ENCODE measurements at regions of chr12 and their contacts with region 1.

Region 1: GRCh38 chr12:34022079-34022830 is at the start of gene ALG10:
- DNase-seq: peak; percentile 97
- H3K4me3 ChIP-seq: peak within 1 kb of the TSS; percentile 71 to 87
- H3K27ac ChIP-seq: peak within 1 kb of the TSS; percentile 87 to 89
- H3K4me1 ChIP-seq: peaks cover 5% of the 10 kb centered on the region
- H3K27me3 ChIP-seq: no peaks in the 10 kb centered on the region
- CTCF ChIP-seq: peak; percentile 51 to 82 (median 72)
- POLR2A ChIP-seq: no peak
- total RNA-seq, gene ALG10: 17.7 TPM

Region 2: GRCh38 chr12:32755654-32756475 is 1266.4 kb before region 1 on chr12 and contains the start of gene YARS2:
- intact Hi-C with region 1: loop called (anchors 10 kb)
- DNase-seq: peak; percentile 98
- H3K4me3 ChIP-seq: peak within 1 kb of the TSS; percentile 98 to 100
- H3K27ac ChIP-seq: peak within 1 kb of the TSS; percentile 96
- H3K4me1 ChIP-seq: peaks cover 4% of the 10 kb centered on the region
- H3K27me3 ChIP-seq: no peaks in the 10 kb centered on the region
- CTCF ChIP-seq: peak; percentile 66 to 85 (median 71)
- POLR2A ChIP-seq: peak; percentile 73
- total RNA-seq, gene YARS2: 19.5 to 29.8 TPM

Region 3: DNA sequence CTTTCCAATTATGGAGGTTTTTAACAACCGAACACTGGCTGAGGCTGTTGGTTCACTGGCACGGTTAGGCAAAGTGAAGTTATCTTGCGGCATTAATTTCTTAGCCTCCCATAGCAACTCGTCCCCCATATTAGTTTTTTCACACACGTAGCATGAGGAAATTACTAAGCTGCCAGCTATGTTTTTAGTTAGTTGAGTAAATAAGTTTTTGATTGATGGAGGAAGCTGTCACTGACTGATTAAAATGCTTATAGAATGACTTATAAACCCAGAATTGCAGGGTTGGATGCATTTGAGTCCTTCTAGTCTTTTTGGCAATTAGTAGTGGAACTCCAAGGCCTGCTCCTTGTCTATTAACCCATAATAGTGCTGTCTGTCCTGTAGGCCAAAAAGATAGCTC is 97.1 kb after region 1 on chr12:
- intact Hi-C with region 1: no loop called
- DNase-seq: no peak
- H3K4me3 ChIP-seq: no peak overlapping the region
- H3K27ac ChIP-seq: no peak overlapping the region
- H3K4me1 ChIP-seq: no peaks in the 10 kb centered on the region
- H3K27me3 ChIP-seq: no peaks in the 10 kb centered on the region
- CTCF ChIP-seq: no peak
- POLR2A ChIP-seq: no peak

Region 4: GRCh38 chr12:34264132-34264531 is 241.9 kb after region 1 on chr12:
- intact Hi-C with region 1: no loop called
- DNase-seq: no peak
- H3K4me3 ChIP-seq: no peak overlapping the region
- H3K27ac ChIP-seq: no peak overlapping the region
- H3K4me1 ChIP-seq: no peaks in the 10 kb centered on the region
- H3K27me3 ChIP-seq: no peaks in the 10 kb centered on the region
- CTCF ChIP-seq: no peak
- POLR2A ChIP-seq: no peak